Heart left ventricle (tissue), 16 donors: ENCODE measurements at regions of chr13 and their contacts with region 1.

Region 1: GRCh38 chr13:29428310-29429181 is 166.9 kb downstream of the SLC7A1 start:
- DNase-seq: peak; percentile 46 to 74 (median 67)
- ATAC-seq: peak; percentile 93 to 96 (median 96)
- H3K4me3 ChIP-seq: peak overlapping the region; percentile 33 to 71 (median 55)
- H3K27ac ChIP-seq: peak overlapping the region; percentile 40 to 94 (median 88)
- H3K4me1 ChIP-seq: peaks cover 0 to 25% (median 4%) of the 10 kb centered on the region in 12 donors
- H3K27me3 ChIP-seq: peaks cover 0 to 30% (median 5%) of the 10 kb centered on the region in 9 donors
- CTCF ChIP-seq: peak in 6 of 12 donors; percentile 10 to 31 (median 14)
- POLR2A ChIP-seq: peak in 1 of 2 donors; percentile 40

Region 2: GRCh38 chr13:29182216-29182615 is 246.3 kb before region 1 on chr13:
- intact Hi-C with region 1: no loop called
- DNase-seq: no peak
- ATAC-seq: no peak
- H3K4me3 ChIP-seq: no peak overlapping the region
- H3K27ac ChIP-seq: no peak overlapping the region
- H3K4me1 ChIP-seq: no peaks in the 10 kb centered on the region
- H3K27me3 ChIP-seq: no peaks in the 10 kb centered on the region
- CTCF ChIP-seq: no peak
- POLR2A ChIP-seq: no peak

Region 3: GRCh38 chr13:29465741-29466293 is 37.3 kb after region 1 on chr13:
- intact Hi-C with region 1: loop called in 4 of 10 experiments (anchors 2 to 5 kb)
- DNase-seq: peak in 4 of 5 donors; percentile 20 to 67 (median 50)
- ATAC-seq: peak; percentile 52 to 75 (median 66)
- H3K4me3 ChIP-seq: no peak overlapping the region
- H3K27ac ChIP-seq: peak overlapping the region in 10 of 12 donors; percentile 41 to 88 (median 66)
- H3K4me1 ChIP-seq: peaks cover 0 to 41% (median 18%) of the 10 kb centered on the region in 12 donors
- H3K27me3 ChIP-seq: no peaks in the 10 kb centered on the region
- CTCF ChIP-seq: no peak
- POLR2A ChIP-seq: no peak

Region 4: GRCh38 chr13:29472332-29472961 is 43.9 kb after region 1 on chr13:
- intact Hi-C with region 1: loop called in 3 of 10 experiments (anchors 5 kb)
- DNase-seq: peak in 2 of 5 donors; percentile 39 to 50
- ATAC-seq: peak; percentile 14 to 48 (median 30)
- H3K4me3 ChIP-seq: no peak overlapping the region
- H3K27ac ChIP-seq: no peak overlapping the region
- H3K4me1 ChIP-seq: peaks cover 0 to 2% (median 0%) of the 10 kb centered on the region in 12 donors
- H3K27me3 ChIP-seq: no peaks in the 10 kb centered on the region
- CTCF ChIP-seq: peak; percentile 52 to 87 (median 70)
- POLR2A ChIP-seq: no peak